Heart left ventricle (tissue), 16 donors: ENCODE measurements at regions of chr19 and their contacts with region 1.

Region 1: DNA sequence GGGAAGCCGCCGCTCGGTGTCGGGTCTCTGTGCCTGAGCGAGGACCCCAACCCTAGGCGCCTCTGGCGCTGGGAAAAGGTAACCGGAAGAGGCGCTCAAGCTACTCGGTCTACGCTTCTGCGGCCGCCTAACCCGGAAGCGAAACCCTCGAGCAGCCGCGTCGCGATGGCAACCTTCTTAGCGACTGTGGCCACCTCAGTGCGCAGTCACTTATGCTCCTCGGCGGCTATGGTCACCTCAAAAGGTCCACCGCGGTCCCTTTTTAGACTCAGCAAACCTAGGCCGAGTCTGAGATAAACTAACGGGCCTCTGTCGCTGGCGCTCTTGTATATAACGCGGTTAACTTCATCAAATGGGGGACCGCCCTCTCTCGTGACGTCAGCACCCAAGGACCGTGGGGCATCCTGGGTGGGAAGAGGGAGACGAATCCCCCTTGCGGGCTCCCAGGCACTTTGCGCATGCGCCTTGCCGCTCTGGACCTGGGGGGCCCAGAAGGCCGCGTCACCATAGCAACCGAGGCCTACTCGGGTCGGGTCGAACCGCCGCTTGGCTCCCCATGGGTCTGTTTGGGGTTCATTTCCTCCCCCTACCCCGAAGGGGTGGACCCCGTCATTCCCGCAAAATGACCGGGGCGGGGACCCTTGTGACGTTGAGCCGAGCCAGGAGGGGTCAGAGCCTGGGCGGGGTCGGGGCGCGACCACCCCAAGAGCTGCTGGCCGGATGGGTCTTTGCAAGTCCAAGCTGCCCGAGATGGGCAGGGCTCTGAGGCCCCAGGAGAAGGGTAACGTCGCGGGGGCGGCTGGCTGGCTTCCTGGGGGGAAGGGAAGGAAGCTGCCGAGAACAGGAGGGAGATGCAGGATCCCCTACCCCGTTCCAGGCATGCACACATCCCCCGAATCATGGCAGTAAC is at the start of gene GTF2F1:
- DNase-seq: peak; percentile 96 to 98 (median 98)
- ATAC-seq: peak; percentile 92 to 96 (median 94)
- H3K4me3 ChIP-seq: peak within 1 kb of the TSS; percentile 60 to 99 (median 81)
- H3K27ac ChIP-seq: peak within 1 kb of the TSS; percentile 87 to 98 (median 94)
- H3K4me1 ChIP-seq: peaks cover 0 to 17% (median 10%) of the 10 kb centered on the region in 12 donors
- H3K27me3 ChIP-seq: no peaks in the 10 kb centered on the region
- CTCF ChIP-seq: peak in 4 of 12 donors; percentile 15 to 33 (median 25)
- POLR2A ChIP-seq: peak in 1 of 2 donors; percentile 40
- total RNA-seq, gene GTF2F1: 20.8 to 41.8 (median 29.8) TPM

Region 2: GRCh38 chr19:4464815-4465581 is 1928.3 kb before region 1 on chr19:
- intact Hi-C with region 1: loop called in 1 of 10 experiments (anchors 5 kb)
- DNase-seq: no peak
- ATAC-seq: no peak
- H3K4me3 ChIP-seq: no peak overlapping the region
- H3K27ac ChIP-seq: no peak overlapping the region
- H3K4me1 ChIP-seq: no peaks in the 10 kb centered on the region
- H3K27me3 ChIP-seq: no peaks in the 10 kb centered on the region
- CTCF ChIP-seq: no peak
- POLR2A ChIP-seq: no peak

Region 3: DNA sequence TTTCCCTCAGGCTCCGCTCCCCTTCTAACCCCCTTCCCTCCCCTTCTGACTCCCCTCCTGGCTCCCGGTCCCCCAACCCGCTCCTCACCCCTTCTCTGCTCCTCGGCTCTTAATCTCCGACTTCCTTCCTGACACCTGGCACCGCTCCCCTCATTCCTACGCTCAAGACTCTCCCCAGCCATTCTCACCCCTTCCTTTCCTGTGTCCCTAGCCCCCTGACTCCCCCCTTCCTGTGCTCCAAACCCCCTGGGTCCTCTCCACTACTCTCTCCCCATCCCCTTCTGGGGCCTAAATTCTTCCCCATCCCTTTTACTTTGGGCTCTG is 31.3 kb before region 1 on chr19:
- intact Hi-C with region 1: loop called in 1 of 10 experiments (anchors 1 kb)
- DNase-seq: peak in 1 of 5 donors; percentile 37
- ATAC-seq: peak in 3 of 4 donors; percentile 10 to 23 (median 20)
- H3K4me3 ChIP-seq: peak overlapping the region; percentile 72 to 99 (median 84)
- H3K27ac ChIP-seq: peak overlapping the region; percentile 69 to 94 (median 89)
- H3K4me1 ChIP-seq: peaks cover 0 to 17% (median 7%) of the 10 kb centered on the region in 12 donors
- H3K27me3 ChIP-seq: no peaks in the 10 kb centered on the region
- CTCF ChIP-seq: no peak
- POLR2A ChIP-seq: no peak

Region 4: DNA sequence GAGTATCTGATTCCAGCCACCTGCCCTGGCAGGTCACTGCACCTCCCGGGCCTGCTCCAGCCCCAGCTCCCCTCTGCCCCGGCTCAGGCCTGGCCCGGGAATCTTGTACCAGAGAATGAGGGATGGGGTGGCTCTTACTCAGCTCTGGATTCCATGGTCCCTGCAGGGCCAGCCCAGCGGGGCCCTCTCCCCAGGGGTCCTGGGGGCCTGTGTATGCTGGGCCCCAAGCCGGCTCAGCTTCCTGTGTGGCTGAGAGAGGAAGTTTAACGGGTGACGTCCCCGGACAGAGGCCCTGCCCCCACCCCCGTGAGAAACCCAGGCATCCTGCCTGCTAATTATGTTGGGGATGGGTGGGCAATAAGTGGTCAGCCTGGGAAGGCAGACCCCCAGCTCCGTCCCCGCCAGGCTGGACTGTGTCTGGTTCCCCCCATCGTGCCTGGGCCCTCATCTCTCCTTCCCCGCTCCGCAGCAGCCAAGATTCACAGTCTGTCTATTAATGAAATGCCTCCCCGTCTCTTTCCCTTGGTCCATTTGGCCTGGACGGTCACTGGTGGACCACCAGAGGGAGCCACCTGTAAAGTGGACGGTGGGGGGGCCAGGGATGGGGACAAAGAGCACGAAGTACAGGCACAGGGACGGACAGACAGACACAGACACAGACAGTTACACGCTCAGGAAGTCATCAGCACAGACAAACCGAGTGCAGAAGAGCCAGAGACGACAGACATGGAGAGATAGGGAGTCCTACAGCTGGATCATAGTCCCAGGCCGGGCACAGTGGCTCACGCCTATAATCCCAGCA is 88.4 kb after region 1 on chr19 and contains the start of gene DENND1C:
- intact Hi-C with region 1: no loop called
- DNase-seq: peak in 3 of 5 donors; percentile 24 to 75 (median 41)
- ATAC-seq: peak in 3 of 4 donors; percentile 46 to 73 (median 72)
- H3K4me3 ChIP-seq: peak within 1 kb of the TSS in 9 of 12 donors; percentile 10 to 68 (median 32)
- H3K27ac ChIP-seq: peak within 1 kb of the TSS in 1 of 12 donors; percentile 88
- H3K4me1 ChIP-seq: peaks cover 0 to 9% (median 0%) of the 10 kb centered on the region in 12 donors
- H3K27me3 ChIP-seq: peaks cover under 1 to 38% (median 6%) of the 10 kb centered on the region in 9 donors
- CTCF ChIP-seq: peak in 11 of 12 donors; percentile 26 to 48 (median 42)
- POLR2A ChIP-seq: no peak
- total RNA-seq, gene DENND1C: 0.17 to 9.5 (median 0.50) TPM